ENCODE measurements at regions of chr1 and their contacts with region 1.

Region 1: DNA sequence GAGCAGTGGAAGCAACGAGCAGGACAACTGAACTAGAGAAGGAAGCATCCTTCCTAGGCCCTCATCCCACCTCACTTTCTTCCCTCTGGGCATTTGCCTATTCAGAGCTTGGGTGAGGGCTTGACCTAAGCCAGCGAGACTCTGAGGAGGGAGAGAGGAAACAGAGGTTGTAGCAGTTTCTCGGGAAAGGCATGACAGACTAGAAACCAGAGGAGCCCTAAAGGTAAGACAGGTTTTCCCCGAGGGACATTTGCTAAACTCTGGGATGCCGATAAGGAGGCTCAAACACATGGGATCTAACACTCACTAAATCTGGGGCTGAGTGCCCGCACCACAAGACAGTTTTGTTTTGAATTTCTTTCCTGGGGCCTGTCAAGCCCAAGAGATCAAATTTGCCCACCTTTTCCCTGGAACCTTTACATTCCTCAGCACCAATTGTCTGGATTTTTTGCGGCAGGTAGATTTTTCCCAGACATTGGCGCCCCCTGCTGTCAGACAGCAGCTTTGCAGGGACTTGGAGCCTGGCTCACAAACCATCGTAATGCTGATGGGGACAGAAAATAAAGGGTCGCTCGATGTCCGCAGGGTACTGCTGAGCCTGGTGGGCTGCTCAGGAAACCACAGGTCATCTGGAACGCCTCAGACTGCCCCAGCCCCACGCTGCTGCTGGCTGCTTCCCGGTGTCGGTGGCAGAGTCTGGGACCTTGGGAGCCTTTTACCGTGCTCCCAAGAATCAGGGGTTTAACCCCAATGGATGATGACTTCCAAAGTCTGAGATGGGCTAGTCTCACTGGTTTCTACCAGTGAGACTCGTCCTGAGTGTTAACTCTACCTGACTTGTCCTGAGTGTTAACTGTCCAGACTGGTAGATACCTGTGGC is 23.4 kb upstream of the TSPAN2 start:
- DNase-seq: peak in 1 of 2 experiments; percentile 89
- H3K4me3 ChIP-seq: no peak overlapping the region
- H3K27ac ChIP-seq: no peak overlapping the region
- H3K4me1 ChIP-seq: peaks cover 0 to 2% (median 1%) of the 10 kb centered on the region in 4 experiments; a peak in 4 of 7 replicates
- H3K27me3 ChIP-seq: no peaks in the 10 kb centered on the region
- CTCF ChIP-seq: peak; percentile 79 to 83 (median 82)
- EP300 ChIP-seq: no peak
- POLR2A ChIP-seq: no peak
- RAD21 ChIP-seq: peak; percentile 81 to 87

Region 2: DNA sequence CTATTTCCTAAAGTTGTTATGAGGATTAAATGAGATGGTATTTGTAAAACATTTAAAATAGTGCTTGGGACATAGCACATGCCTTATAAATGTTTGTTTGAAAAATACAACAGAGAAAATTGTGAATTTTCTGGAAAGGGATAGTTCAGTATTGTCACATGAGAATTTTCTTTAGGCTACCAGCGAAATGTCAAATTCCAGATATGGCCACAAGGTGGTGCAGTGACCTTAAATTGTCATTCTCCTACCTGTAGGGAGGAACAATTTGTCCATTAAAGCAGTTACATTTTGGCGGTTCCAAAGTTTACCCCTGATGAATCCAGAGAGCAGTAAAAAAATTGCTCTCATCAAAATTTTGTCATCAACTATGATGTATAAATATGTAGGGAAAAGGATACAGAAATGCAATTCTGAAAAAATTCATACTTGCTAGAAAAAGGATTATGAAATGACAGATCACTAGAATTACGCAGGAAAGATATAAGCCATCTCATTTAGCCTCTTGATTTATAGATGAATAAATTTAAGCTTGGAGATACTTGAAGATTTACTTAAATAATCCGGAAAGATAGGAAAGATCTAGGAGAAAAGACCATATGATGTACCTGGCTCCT is 133.4 kb before region 1 on chr1:
- CTCF ChIA-PET with region 1: interaction called, 11 read pairs
- POLR2A ChIA-PET with region 1: no interaction called
- DNase-seq: peak in 1 of 2 experiments; percentile 81
- H3K4me3 ChIP-seq: no peak overlapping the region
- H3K27ac ChIP-seq: no peak overlapping the region
- H3K4me1 ChIP-seq: no peaks in the 10 kb centered on the region
- H3K27me3 ChIP-seq: no peaks in the 10 kb centered on the region
- CTCF ChIP-seq: peak in 2 of 3 experiments; percentile 65 to 71; a peak in 3 of 4 replicates
- EP300 ChIP-seq: no peak
- POLR2A ChIP-seq: no peak
- RAD21 ChIP-seq: peak; percentile 78

Region 3: GRCh38 chr1:115089420-115090185 is 23.1 kb before region 1 on chr1 and contains the start of gene TSPAN2:
- CTCF ChIA-PET with region 1: interaction called, 24 read pairs
- POLR2A ChIA-PET with region 1: interaction called, 4 read pairs
- DNase-seq: peak; percentile 90 to 91
- H3K4me3 ChIP-seq: peak within 1 kb of the TSS; percentile 82 to 100 (median 93)
- H3K27ac ChIP-seq: peak within 1 kb of the TSS; percentile 91
- H3K4me1 ChIP-seq: peaks cover 4 to 10% (median 4%) of the 10 kb centered on the region in 4 experiments; a peak in 5 of 7 replicates
- H3K27me3 ChIP-seq: no peaks in the 10 kb centered on the region; a peak in 2 of 7 replicates
- CTCF ChIP-seq: peak; percentile 51 to 56 (median 52)
- EP300 ChIP-seq: no peak
- POLR2A ChIP-seq: peak; percentile 93 to 95
- RAD21 ChIP-seq: peak; percentile 25 to 41; a peak in 3 of 4 replicates
- total RNA-seq, gene TSPAN2: 13.0 and 14.2 TPM in 2 replicates

Region 4: DNA sequence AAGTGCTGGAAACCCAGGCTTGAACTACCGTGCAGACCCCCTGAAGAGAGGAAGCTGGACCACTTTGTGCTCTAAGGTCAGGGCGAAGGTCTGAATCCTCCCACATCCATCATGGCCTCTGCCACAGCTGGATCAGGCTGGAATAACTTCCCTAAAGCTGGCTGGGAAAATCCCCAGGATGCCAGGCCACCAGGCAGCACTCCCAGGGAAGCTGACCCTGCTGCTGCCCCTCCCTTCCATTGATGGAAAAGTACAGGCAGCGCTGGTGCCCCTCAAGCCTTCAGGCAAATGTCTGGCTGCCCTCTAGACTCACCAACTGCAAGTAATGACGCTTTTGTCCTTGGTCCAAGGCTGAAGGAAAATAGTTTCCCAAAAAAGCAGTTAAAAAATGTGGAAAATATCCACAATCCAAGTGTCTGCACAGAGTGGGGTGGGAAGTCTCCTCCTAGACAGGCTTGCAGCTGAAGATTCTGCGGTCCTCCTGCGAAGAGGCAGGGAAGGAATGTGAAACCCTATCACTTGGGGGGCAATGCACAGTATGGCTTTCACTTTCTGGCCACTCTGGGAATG is 16.4 kb after region 1 on chr1:
- CTCF ChIA-PET with region 1: interaction called, 24 read pairs
- POLR2A ChIA-PET with region 1: no interaction called
- DNase-seq: no peak
- H3K4me3 ChIP-seq: no peak overlapping the region
- H3K27ac ChIP-seq: no peak overlapping the region
- H3K4me1 ChIP-seq: no peaks in the 10 kb centered on the region
- H3K27me3 ChIP-seq: no peaks in the 10 kb centered on the region
- CTCF ChIP-seq: no peak
- EP300 ChIP-seq: no peak
- POLR2A ChIP-seq: no peak
- RAD21 ChIP-seq: no peak